PC-3 (cell line): ENCODE measurements at regions of chr5 and their contacts with region 1.

Region 1: DNA sequence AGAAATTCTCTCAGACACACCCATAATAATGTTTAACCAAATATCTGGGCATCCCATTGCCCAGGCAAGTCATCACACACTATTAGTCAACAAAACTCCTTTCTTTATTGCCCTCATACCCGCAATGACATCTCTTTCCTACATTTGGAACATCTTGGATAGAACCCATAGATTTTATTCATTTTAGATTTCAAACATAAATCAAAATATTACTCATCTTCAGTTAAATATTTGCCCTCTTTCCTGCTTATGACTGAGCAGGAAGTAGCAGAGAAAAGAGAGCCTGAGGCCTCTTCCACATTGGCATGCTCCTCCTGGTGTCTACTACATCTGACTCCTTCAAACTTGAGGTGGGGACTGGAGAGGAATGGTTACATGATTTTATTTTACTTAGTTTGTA is 592.0 kb downstream of the CHSY3 start:
- DNase-seq: peak; percentile 92
- ATAC-seq: peak; percentile 100
- H3K4me3 ChIP-seq: no peak overlapping the region
- H3K27ac ChIP-seq: peak overlapping the region; percentile 100
- H3K4me1 ChIP-seq: peaks cover 17% of the 10 kb centered on the region
- H3K27me3 ChIP-seq: no peaks in the 10 kb centered on the region
- CTCF ChIP-seq: no peak

Region 2: DNA sequence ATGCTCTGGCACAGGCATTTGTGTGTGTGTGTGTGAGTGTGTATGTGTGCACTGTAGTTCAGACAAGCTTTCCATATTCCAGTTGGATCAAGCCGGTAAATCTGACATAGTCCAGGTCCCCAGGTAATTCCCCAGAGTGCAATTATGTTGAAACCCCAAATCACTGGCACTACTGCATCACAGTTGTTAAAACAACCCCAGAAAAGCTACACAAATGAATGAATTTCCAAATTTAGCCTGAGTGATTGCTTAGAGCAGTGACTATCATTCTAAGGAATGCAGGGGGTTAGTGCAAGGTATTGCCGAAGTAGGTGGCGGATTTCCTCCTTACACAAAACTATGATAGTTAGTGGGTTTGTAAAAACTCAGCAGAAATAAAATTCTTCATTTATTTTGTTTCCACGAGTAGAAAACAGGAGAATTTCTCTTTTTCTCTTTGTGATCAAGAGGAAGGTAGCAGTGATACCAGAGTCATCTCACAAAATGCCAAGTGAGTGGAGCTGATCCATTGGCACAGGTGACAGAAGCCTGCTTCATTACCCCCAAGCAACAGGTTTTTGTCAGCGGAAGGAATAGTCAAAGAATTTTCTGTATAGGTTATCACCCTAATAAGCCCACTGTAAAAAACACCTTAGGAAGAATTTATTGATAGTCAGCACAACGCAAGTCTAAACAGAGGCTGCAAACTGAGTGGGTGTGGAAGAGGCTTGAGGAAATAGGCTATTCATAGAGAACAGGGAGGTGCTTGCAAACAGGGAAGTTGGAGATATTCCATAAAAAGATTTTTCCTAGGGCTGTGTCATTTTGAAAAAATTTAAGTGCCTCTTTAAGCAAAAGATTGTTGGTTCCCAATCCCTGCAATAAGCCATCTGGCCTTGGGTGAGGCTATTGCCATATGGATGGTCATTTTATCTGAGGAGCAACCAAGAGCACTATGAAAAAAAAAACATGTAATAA is 206.8 kb before region 1 on chr5:
- CTCF ChIA-PET with region 1: no interaction called
- POLR2A ChIA-PET with region 1: no interaction called
- intact Hi-C with region 1: loop called (anchors 1 kb)
- DNase-seq: peak; percentile 80
- ATAC-seq: peak; percentile 94
- H3K4me3 ChIP-seq: peak overlapping the region; percentile 52
- H3K27ac ChIP-seq: peak overlapping the region; percentile 61
- H3K4me1 ChIP-seq: peaks cover 17% of the 10 kb centered on the region
- H3K27me3 ChIP-seq: no peaks in the 10 kb centered on the region
- CTCF ChIP-seq: no peak

Region 3: GRCh38 chr5:130462516-130462915 is 33.7 kb before region 1 on chr5:
- CTCF ChIA-PET with region 1: no interaction called
- POLR2A ChIA-PET with region 1: no interaction called
- intact Hi-C with region 1: no loop called
- DNase-seq: peak; percentile 24
- ATAC-seq: no peak
- H3K4me3 ChIP-seq: no peak overlapping the region
- H3K27ac ChIP-seq: no peak overlapping the region
- H3K4me1 ChIP-seq: no peaks in the 10 kb centered on the region
- H3K27me3 ChIP-seq: no peaks in the 10 kb centered on the region
- CTCF ChIP-seq: no peak

Region 4: DNA sequence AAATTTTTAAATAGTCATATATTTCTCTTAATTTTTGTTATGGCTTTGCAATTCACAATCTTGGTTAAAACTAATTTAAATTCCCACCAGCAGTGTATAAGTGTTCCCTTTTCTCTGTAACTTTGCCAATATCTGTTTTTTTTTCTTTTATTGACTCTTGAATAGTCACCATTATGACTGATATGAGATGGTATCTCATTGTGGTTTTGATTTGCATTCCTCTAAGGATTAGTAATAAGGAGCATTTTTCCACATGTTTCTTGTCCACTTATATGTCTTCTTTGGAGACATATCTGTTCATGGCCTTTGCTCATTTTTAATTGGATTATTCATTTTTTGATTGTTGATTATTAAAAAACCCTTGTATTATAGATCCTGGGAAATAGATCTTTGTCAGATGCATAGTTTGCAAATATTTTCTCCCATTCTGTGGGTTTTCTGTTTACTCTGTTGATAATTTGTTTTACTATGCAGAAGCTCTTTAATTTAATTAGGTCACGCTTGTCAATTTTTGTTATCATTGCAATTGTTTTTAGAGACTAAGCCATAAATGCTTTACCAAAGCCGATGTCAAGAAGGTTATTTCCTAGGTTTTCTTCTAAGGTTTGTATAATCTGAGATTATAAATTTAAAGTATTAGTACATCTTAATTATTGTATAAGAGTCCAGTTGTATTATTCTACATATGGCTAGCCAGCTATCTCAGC is 18.9 kb after region 1 on chr5:
- CTCF ChIA-PET with region 1: no interaction called
- POLR2A ChIA-PET with region 1: no interaction called
- intact Hi-C with region 1: loop called (anchors 1 kb)
- DNase-seq: peak; percentile 95
- ATAC-seq: peak; percentile 99
- H3K4me3 ChIP-seq: no peak overlapping the region
- H3K27ac ChIP-seq: peak overlapping the region; percentile 89
- H3K4me1 ChIP-seq: peaks cover 18% of the 10 kb centered on the region
- H3K27me3 ChIP-seq: no peaks in the 10 kb centered on the region
- CTCF ChIP-seq: no peak

Region 5: GRCh38 chr5:130541617-130542221 is 45.5 kb after region 1 on chr5:
- CTCF ChIA-PET with region 1: no interaction called
- POLR2A ChIA-PET with region 1: no interaction called
- intact Hi-C with region 1: loop called (anchors 5 kb)
- DNase-seq: peak; percentile 86
- ATAC-seq: peak; percentile 65
- H3K4me3 ChIP-seq: peak overlapping the region; percentile 3; the same call in 1 of the 2 replicates
- H3K27ac ChIP-seq: peak overlapping the region; percentile 88
- H3K4me1 ChIP-seq: peaks cover 46% of the 10 kb centered on the region
- H3K27me3 ChIP-seq: no peaks in the 10 kb centered on the region
- CTCF ChIP-seq: no peak

Region 6: GRCh38 chr5:130580264-130580663 is 84.0 kb after region 1 on chr5:
- CTCF ChIA-PET with region 1: no interaction called
- POLR2A ChIA-PET with region 1: no interaction called
- intact Hi-C with region 1: no loop called
- DNase-seq: no peak
- ATAC-seq: no peak
- H3K4me3 ChIP-seq: no peak overlapping the region
- H3K27ac ChIP-seq: no peak overlapping the region
- H3K4me1 ChIP-seq: no peaks in the 10 kb centered on the region
- H3K27me3 ChIP-seq: no peaks in the 10 kb centered on the region
- CTCF ChIP-seq: no peak

Region 7: DNA sequence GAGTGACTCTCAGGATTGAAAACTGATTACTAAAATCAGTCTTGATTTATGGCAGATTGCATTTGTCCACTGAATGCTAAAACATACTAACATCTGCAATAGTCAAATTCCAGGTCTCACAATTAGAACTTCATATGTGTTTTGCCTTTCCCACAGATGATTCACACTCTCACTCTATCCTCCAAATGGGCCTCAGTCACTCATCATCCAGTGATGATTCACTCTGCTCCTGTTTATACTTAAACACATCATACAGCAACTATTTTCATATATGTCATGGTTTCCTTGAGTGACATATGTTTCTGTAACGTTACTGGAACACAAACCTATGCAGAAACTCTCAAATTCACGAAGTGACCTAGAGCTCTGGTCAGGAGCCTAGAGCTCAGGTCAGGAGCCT is 156.0 kb after region 1 on chr5:
- CTCF ChIA-PET with region 1: no interaction called
- POLR2A ChIA-PET with region 1: no interaction called
- intact Hi-C with region 1: loop called (anchors 10 kb)
- DNase-seq: peak; percentile 94
- ATAC-seq: peak; percentile 97
- H3K4me3 ChIP-seq: no peak overlapping the region
- H3K27ac ChIP-seq: peak overlapping the region; percentile 79
- H3K4me1 ChIP-seq: peaks cover 20% of the 10 kb centered on the region
- H3K27me3 ChIP-seq: no peaks in the 10 kb centered on the region
- CTCF ChIP-seq: no peak

Region 8: DNA sequence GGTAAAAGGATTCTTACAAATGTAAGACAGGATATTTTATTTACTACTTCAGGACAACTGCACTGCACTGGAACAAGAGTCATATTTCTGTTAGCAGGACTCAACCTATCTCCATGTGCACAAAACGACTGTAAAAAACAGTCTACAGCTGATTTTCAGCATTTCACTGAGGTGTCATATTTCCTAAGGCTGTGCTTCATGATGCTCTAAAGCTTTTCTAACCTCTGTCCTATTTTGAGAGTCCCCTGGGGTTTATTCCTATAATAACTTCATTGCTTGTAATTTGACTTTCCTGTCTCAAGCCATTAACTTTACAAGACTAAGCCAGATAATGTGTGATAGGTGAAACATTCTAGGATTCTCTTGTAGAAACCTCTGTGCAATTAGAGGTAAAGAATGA is 196.6 kb after region 1 on chr5:
- CTCF ChIA-PET with region 1: no interaction called
- POLR2A ChIA-PET with region 1: no interaction called
- intact Hi-C with region 1: loop called (anchors 5 kb)
- DNase-seq: peak; percentile 51
- ATAC-seq: peak; percentile 88
- H3K4me3 ChIP-seq: no peak overlapping the region
- H3K27ac ChIP-seq: peak overlapping the region; percentile 85
- H3K4me1 ChIP-seq: peaks cover 14% of the 10 kb centered on the region
- H3K27me3 ChIP-seq: no peaks in the 10 kb centered on the region
- CTCF ChIP-seq: no peak